OCI-LY7 (cell line): ENCODE measurements at regions of chr2 and their contacts with region 1.

Region 1: DNA sequence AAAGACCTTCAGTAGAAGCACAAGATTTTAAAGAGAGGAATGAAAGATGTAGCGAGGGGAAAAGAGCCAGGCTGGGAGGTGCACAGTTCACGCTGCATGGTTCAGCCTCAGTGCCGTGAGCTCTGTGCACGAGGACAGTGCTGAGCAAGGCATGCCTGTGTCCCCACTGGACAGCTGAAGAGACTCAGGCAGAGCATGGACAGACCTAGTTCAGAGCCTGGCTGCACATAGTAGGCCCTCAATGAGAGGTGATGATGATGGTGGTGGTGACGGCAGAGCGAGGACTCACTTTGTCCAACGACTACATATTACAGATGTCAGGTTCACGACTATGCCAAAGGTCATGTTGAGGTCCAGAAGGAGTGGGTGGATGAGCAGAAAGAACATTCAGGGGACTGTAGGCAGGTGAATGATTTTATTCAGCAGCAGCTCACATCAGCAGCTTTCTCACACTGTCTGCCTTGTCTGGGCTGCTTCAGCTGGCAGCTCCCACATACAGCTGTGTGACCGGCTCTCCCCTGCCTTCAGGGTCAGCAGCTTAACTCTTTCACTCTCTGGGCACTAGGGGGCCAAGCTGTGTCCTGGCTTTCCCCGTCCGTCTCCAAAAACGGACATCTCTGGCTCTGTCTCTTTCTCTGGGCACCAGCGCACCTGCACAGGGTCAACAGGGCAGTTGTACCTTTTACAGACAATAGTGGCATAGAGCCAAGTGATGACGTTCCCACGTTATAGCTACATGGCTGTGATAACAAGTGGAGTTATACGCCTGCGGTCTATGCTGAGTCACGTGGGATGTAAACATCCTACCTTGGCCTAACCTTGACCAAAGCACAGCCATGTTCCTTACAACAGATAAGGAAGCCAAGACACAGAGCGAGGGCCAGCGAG is 128.8 kb upstream of the MSH6 start:
- DNase-seq: peak; percentile 70
- H3K4me3 ChIP-seq: peak overlapping the region; percentile 71
- H3K27ac ChIP-seq: peak overlapping the region; percentile 97
- H3K4me1 ChIP-seq: peaks cover 78% of the 10 kb centered on the region
- CTCF ChIP-seq: peak; percentile 73

Region 2: DNA sequence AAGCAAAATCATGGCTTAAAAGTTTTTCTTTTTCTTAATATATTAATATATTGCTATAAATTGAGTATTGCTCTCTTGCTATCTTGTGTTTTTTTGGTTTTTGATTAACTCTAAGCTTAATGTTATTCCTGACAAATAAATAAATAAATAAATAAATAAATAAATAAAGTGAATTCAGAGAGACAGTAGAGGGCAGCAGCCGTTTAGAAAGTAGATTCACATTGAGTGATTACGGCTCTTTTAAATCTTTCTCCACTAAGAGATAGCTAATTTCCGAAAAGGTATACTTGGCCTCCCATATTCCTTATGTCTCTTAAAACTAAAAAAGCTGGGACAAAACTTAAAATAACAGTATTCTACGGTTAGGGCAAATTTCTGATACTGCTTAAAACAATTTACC is 216.9 kb before region 1 on chr2:
- CTCF ChIA-PET with region 1: no interaction called
- POLR2A ChIA-PET with region 1: no interaction called
- intact Hi-C with region 1: loop called (anchors 5 kb)
- DNase-seq: peak; percentile 50
- H3K4me3 ChIP-seq: no peak overlapping the region
- H3K27ac ChIP-seq: no peak overlapping the region
- H3K4me1 ChIP-seq: peaks cover 4% of the 10 kb centered on the region
- CTCF ChIP-seq: peak; percentile 75

Region 3: DNA sequence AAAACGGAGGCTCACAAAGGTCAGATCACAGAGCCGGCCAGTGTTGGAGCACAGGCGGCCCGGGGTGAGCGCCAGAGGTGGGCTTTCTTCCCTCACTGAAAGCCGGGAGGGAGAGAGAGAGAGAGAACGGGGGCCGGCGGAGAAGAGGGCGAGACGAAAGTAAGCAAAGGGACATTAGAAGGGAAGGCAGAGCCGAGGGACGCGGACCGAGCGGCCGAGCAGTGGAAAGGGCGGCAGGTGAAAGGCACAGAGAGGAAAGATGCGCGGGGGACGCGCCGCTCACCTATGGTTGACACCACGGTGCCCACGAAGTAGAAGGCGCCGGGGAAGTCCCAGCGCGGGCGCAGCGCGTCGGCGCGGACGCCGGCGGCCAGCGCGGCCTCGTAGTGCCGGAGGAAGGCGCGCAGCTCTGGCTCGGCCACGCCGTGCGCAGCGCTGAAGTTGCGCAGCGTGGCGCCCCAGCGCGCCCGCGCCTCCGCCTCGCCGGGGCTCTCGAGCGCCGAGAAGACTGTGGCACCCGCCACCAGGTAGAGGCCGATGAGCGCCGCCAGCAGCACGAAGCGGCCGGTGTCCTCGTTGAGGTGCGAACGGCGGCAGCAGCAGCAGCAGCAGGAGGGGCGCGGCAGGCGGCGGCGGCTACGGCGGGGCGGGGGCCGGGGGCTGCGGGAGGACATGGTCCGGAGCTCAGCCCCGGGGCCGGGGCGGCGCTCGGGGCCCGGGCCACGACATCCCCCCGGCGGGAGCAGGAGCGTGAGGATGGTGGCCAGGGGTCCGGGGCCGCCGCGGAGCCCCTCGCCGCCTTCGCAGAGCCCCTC is 84.3 kb before region 1 on chr2:
- CTCF ChIA-PET with region 1: no interaction called
- POLR2A ChIA-PET with region 1: no interaction called
- intact Hi-C with region 1: no loop called
- DNase-seq: no peak
- H3K4me3 ChIP-seq: no peak overlapping the region
- H3K27ac ChIP-seq: no peak overlapping the region
- H3K4me1 ChIP-seq: no peaks in the 10 kb centered on the region
- CTCF ChIP-seq: no peak

Region 4: GRCh38 chr2:47640356-47640755 is 13.8 kb before region 1 on chr2:
- CTCF ChIA-PET with region 1: interaction called, 4 read pairs
- POLR2A ChIA-PET with region 1: interaction called, 10 read pairs
- intact Hi-C with region 1: no loop called
- DNase-seq: no peak
- H3K4me3 ChIP-seq: no peak overlapping the region
- H3K27ac ChIP-seq: no peak overlapping the region
- H3K4me1 ChIP-seq: peaks cover 47% of the 10 kb centered on the region
- CTCF ChIP-seq: no peak

Region 5: DNA sequence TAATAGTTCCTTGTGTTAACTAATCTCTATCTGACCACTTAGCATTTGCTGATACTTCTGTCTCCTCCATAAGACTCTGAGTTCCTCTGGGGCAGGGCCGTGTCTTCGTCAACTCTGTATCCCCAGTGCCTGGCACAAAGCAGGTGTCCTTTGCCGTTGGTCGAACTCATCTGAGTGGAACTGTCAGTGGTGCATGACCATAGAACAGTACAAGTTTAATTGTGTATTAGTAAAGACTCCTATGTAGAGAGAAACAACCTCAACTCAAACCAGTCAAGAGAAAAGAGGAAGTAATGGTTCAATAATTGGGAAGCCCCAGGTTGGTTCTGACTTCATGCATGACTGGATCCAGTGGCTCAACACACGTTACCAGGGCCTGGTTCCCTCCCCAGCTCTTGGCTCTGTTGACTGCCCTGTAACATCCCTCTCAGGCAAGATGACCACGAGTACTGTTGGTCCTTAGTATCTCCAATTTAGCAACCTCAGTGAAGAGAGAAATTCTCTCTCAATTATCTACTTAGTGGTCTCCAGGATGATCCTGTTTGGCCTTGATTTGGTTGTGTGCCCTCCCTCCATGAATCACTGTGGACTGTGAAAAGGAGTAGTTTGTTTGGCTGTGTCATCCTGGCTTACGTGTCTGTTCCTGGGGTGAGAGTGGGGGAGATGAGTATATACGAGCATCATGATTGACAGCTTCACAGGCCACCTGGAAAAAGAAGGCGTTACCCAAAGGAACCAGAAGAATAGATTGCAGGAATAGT is 70.3 kb after region 1 on chr2:
- CTCF ChIA-PET with region 1: interaction called, 5 read pairs
- POLR2A ChIA-PET with region 1: interaction called, 55 read pairs
- intact Hi-C with region 1: loop called (anchors 1 kb)
- DNase-seq: peak; percentile 99
- H3K4me3 ChIP-seq: peak overlapping the region; percentile 28
- H3K27ac ChIP-seq: peak overlapping the region; percentile 100
- H3K4me1 ChIP-seq: peaks cover 96% of the 10 kb centered on the region
- CTCF ChIP-seq: no peak

Region 6: GRCh38 chr2:47782671-47783485 is 128.7 kb after region 1 on chr2 and contains the start of gene MSH6:
- CTCF ChIA-PET with region 1: no interaction called
- POLR2A ChIA-PET with region 1: no interaction called
- intact Hi-C with region 1: loop called (anchors 5 kb)
- DNase-seq: peak; percentile 93
- H3K4me3 ChIP-seq: peak within 1 kb of the TSS; percentile 100
- H3K27ac ChIP-seq: peak within 1 kb of the TSS; percentile 93
- H3K4me1 ChIP-seq: peaks cover 54% of the 10 kb centered on the region
- CTCF ChIP-seq: no peak; the same call in 1 of the 2 replicates
- total RNA-seq, gene MSH6: 291 and 303 TPM in 2 replicates

Region 7: DNA sequence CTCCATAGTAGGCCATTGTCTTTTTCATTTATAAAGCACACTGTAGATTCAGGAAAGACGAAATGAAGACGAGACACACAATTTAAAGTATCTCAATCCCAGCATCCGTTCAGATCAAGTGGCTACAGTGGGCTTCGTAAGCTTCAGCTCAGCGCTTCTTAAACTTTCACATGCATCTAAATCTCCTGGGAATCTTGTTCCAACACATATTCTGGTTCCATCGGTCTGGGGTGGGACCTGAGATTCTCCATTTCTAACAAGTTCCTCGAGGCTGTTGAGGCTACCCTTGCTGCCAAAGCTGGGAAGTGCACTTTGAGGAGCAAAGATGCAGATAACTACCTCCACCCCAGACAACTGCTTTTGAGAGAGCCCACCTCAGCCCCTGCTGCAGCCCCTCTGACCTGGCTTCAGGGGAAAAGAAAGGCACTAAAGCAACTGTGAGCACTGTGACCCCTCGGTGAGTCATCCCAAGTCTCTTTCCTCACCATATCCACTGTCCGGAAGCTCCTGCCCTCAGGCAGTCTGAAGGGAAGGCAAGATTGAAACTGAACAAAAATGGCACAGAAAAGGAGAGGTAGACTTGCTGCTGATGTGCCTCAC is 453.3 kb after region 1 on chr2:
- CTCF ChIA-PET with region 1: no interaction called
- POLR2A ChIA-PET with region 1: no interaction called
- intact Hi-C with region 1: loop called (anchors 10 kb)
- DNase-seq: no peak
- H3K4me3 ChIP-seq: no peak overlapping the region
- H3K27ac ChIP-seq: no peak overlapping the region
- H3K4me1 ChIP-seq: peaks cover 7% of the 10 kb centered on the region
- CTCF ChIP-seq: no peak